ENCODE measurements at regions of chr6 and their contacts with region 1.

Region 1: DNA sequence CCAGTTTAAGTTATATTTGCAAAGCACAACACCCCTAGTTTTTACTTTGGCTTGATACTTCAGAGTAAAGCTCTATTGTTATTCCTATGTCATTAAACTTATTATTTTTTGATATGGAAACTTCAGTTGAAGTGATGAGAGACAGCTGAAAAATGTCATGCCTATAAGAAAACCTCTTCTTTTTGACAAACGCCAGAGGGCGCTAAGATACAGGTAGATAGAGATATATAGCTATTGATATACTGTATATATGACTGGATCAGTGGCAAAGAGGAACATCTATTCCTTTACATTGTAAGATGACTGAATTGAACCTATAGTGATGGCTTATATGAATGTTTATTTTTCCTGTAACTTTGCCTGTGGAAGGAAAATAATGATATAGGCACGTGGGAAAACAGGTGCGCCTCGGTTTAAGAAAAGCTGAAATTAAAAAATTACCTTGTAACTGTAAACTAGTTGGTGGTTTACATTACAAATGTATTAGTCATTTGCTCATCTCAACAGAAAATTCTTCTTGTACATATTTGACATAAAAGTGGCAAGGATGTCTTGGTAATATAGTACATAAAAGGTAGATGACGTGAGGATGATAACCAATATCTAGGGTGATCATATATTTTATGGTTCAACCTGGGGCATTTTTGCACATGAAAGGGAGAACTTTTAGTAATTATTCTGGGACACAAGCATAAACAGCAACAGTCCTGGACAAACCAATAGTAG is 74.1 kb downstream of the LAMA4 start:
- DNase-seq: no peak
- H3K4me3 ChIP-seq: no peak overlapping the region
- H3K27ac ChIP-seq: peak overlapping the region; percentile 41 to 71 (median 58)
- H3K4me1 ChIP-seq: peaks cover 3 to 65% (median 59%) of the 10 kb centered on the region in 4 donors
- H3K27me3 ChIP-seq: no peaks in the 10 kb centered on the region
- CTCF ChIP-seq: peak; percentile 65 to 75 (median 72)
- EP300 ChIP-seq: no peak
- POLR2A ChIP-seq: no peak

Region 2: GRCh38 chr6:112311950-112312547 is 131.8 kb after region 1 on chr6:
- intact Hi-C with region 1: loop called (anchors 2 kb)
- DNase-seq: no peak
- H3K4me3 ChIP-seq: no peak overlapping the region
- H3K27ac ChIP-seq: peak overlapping the region in 2 of 4 donors; percentile 24 to 28
- H3K4me1 ChIP-seq: peaks cover 2 to 38% (median 24%) of the 10 kb centered on the region in 4 donors
- H3K27me3 ChIP-seq: no peaks in the 10 kb centered on the region
- CTCF ChIP-seq: peak; percentile 71 to 79 (median 74)
- EP300 ChIP-seq: no peak
- POLR2A ChIP-seq: no peak

Region 3: DNA sequence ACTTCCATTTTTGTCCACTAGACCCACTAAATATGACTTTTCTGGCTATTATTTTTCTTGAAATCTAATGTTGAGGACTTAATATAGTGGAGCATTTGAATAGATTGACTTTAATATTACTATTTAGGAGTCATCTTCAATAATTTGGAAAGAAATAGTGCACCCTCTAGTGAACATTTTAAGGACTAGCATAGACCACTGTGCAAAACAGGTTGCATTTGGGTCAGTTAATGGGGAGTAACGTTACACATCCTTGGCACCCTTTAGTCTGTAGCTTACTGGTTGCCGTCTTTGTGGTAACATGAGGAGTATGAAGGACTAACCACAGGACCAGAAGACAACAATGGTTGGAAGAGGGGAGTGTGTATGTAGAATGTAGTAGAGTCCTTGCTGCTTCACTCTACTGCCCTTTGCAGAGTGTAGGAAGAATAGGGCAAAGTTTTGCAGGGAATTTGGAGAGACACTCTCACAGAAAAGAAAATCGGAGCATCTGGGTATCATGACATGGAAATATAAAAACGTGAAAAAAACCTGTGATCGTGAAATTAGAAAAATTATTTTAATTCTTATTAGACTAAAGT is 192.1 kb after region 1 on chr6:
- intact Hi-C with region 1: loop called (anchors 5 kb)
- DNase-seq: no peak
- H3K4me3 ChIP-seq: no peak overlapping the region
- H3K27ac ChIP-seq: no peak overlapping the region
- H3K4me1 ChIP-seq: peaks cover 0 to under 1% (median under 1%) of the 10 kb centered on the region in 4 donors
- H3K27me3 ChIP-seq: peaks cover 0 to under 1% (median 0%) of the 10 kb centered on the region in 4 donors
- CTCF ChIP-seq: peak; percentile 43 to 64 (median 57)
- EP300 ChIP-seq: no peak
- POLR2A ChIP-seq: no peak

Region 4: DNA sequence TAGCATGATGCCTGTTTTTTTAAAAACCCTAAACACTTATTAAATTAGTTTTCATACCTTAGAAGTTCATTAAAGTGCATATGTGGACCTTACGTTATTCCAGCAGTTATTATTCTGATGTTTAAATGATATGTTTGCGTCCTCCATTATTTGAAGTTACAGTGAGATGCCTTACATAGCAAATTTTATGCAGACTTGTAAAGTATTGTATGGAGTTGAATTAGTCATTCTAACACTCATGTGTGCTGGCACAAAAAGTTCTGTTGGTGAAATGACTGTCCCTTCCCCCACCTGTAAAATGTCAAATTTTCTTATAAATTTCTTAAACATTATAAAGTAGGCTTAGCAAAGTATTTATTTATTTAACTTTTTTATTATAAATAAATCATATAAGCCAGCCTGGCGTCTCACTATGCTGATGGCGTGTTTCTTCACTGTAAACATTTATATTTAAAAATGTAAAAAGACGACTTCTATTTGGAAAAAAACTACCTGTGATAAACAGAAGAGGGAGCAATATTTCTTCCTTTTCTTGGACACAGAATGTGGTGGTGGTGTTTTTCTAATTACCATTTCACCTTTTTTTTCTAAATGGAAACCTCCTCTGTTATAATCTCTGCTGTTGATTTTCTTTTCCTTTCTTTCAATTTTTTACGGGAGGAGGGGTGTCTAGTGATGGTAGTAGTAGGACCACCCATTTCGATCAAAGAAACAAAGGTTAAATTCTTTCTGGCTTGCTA is 322.3 kb after region 1 on chr6:
- intact Hi-C with region 1: no loop called
- DNase-seq: no peak
- H3K4me3 ChIP-seq: no peak overlapping the region
- H3K27ac ChIP-seq: no peak overlapping the region
- H3K4me1 ChIP-seq: peaks cover 0 to 20% (median 17%) of the 10 kb centered on the region in 4 donors
- H3K27me3 ChIP-seq: no peaks in the 10 kb centered on the region
- CTCF ChIP-seq: peak; percentile 32 to 50 (median 38)
- EP300 ChIP-seq: no peak
- POLR2A ChIP-seq: no peak